ENCODE measurements at regions of chr22 and their contacts with region 1.

Region 1: DNA sequence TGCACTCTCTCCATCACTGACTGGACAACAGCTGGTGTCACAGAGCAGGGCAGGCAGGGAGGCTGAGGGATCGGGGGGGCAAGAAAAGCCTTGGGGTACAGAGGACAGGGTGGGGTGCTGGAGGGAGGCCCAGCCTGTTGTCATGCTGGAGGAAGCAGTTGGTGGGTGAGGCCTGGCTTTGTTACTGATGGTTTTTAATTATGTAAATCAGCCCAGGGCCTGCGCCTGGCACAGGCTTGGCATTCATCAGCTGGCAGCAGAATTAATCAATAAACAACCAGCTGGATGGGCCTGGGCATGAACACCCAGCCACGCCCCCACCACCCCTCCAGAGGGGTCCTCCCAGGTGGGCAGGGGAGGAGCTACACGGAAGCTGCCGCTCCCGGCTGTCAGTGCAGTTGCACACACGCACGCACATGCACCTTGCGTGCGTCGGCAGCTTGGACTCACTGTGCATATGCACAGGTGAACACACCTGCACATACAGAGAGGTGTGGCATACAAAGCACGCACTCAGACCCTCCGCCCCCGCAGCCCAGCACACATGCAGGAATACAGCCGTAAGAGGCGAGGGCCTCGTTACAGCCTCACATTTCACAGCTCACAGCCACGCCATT is 21.3 kb upstream of the ELFN2 start:
- DNase-seq: no peak
- H3K4me3 ChIP-seq: no peak overlapping the region
- H3K27ac ChIP-seq: no peak overlapping the region
- H3K4me1 ChIP-seq: peaks cover 5% of the 10 kb centered on the region
- H3K27me3 ChIP-seq: no peaks in the 10 kb centered on the region
- CTCF ChIP-seq: no peak

Region 2: GRCh38 chr22:37324340-37325038 is 124.1 kb before region 1 on chr22:
- CTCF ChIA-PET with region 1: no interaction called
- dilution Hi-C with region 1: loop called (anchors 5 kb)
- in situ Hi-C with region 1: no loop called
- intact Hi-C with region 1: no loop called
- DNase-seq: no peak
- H3K4me3 ChIP-seq: no peak overlapping the region
- H3K27ac ChIP-seq: no peak overlapping the region
- H3K4me1 ChIP-seq: peaks cover 37% of the 10 kb centered on the region
- H3K27me3 ChIP-seq: no peaks in the 10 kb centered on the region
- CTCF ChIP-seq: no peak

Region 3: GRCh38 chr22:37561212-37562048 is 112.8 kb after region 1 on chr22:
- CTCF ChIA-PET with region 1: no interaction called
- dilution Hi-C with region 1: no loop called
- in situ Hi-C with region 1: no loop called
- intact Hi-C with region 1: no loop called
- DNase-seq: peak; percentile 89
- H3K4me3 ChIP-seq: peak overlapping the region; percentile 71 to 91 (median 78)
- H3K27ac ChIP-seq: peak overlapping the region; percentile 90
- H3K4me1 ChIP-seq: peaks cover 46% of the 10 kb centered on the region
- H3K27me3 ChIP-seq: no peaks in the 10 kb centered on the region
- CTCF ChIP-seq: peak; percentile 79 to 88